ENCODE measurements at regions of chr19 and their contacts with region 1.

Region 1: DNA sequence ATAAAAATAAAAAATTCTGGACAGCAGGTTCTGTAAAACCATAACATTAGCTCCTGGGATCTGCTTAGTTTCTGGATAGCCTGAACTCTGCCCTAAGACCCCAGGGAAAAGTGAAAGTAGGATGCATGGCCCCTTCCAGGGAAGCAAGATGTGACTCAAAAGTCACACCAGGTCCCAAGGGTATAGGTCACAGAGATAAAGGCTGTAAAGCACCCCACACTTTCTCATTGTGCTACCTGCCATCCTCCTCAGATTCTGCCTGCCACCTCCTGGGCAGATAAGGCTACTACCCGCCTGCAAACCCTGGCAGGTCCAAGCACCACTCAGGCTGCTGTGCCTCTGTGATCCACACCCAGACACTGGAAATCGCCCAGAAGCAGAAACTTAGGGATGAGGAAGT is 20.6 kb downstream of the FFAR2 start:
- DNase-seq: peak; percentile 51
- ATAC-seq: peak; percentile 100
- H3K4me3 Mint-ChIP-seq: no peak overlapping the region
- H3K27ac Mint-ChIP-seq: no peak overlapping the region
- H3K4me1 Mint-ChIP-seq: peaks cover 14% of the 10 kb centered on the region
- H3K27me3 Mint-ChIP-seq: no peaks in the 10 kb centered on the region
- CTCF ChIP-seq: peak; percentile 39

Region 2: GRCh38 chr19:35066691-35067563 is 401.7 kb before region 1 on chr19:
- CTCF ChIA-PET with region 1: no interaction called
- POLR2A ChIA-PET with region 1: no interaction called
- intact Hi-C with region 1: loop called (anchors 10 kb)
- DNase-seq: peak; percentile 88
- ATAC-seq: peak; percentile 91
- H3K4me3 Mint-ChIP-seq: peak overlapping the region; percentile 24
- H3K27ac Mint-ChIP-seq: peak overlapping the region; percentile 41
- H3K4me1 Mint-ChIP-seq: peaks cover 30% of the 10 kb centered on the region
- H3K27me3 Mint-ChIP-seq: no peaks in the 10 kb centered on the region
- CTCF ChIP-seq: no peak

Region 3: DNA sequence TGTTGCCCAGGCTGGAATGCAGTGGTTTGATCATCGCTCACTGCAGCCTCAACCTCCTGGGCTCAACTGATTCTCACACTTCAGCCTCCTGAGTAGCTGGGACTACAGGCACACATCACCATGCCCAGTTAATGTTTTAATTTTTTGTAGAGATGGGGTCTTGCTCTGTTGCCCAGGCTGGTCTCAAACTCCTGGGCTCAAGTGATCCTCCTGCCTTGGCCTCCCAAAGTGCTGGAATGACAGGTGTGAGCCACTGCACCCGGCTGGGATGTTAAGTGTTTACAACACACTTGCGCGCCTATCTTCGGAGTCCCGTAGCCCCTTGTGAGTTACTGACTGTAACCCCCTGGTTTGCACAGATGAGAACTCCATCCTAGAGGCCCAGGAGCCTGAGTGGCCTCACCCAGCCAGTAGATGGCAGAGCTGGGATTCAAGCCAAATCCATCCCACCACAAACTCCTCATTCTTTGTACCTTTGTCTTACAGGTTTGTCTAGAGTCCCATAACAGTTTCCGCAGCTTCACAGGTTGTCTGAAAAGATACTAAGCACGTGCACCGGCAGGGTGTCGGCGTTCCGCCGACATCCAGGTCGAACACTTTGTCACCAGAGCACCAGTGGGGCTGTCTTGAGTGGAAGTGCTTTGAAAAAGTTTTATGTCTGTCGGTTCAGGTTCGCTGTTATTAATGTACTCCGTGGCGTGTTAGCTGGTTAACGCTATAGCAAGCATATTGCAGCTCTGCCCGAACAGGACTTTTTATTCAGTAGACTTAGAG is 162.0 kb before region 1 on chr19:
- CTCF ChIA-PET with region 1: interaction called, 9 read pairs
- POLR2A ChIA-PET with region 1: interaction called, 3 read pairs
- intact Hi-C with region 1: loop called (anchors 1 kb)
- DNase-seq: no peak
- ATAC-seq: peak; percentile 60
- H3K4me3 Mint-ChIP-seq: no peak overlapping the region
- H3K27ac Mint-ChIP-seq: peak overlapping the region; percentile 12
- H3K4me1 Mint-ChIP-seq: peaks cover 56% of the 10 kb centered on the region
- H3K27me3 Mint-ChIP-seq: no peaks in the 10 kb centered on the region
- CTCF ChIP-seq: no peak

Region 4: GRCh38 chr19:35404879-35405622 is 63.6 kb before region 1 on chr19:
- CTCF ChIA-PET with region 1: interaction called, 3 read pairs
- POLR2A ChIA-PET with region 1: no interaction called
- intact Hi-C with region 1: loop called (anchors 5 kb)
- DNase-seq: no peak
- ATAC-seq: no peak
- H3K4me3 Mint-ChIP-seq: no peak overlapping the region
- H3K27ac Mint-ChIP-seq: no peak overlapping the region
- H3K4me1 Mint-ChIP-seq: peaks cover 17% of the 10 kb centered on the region
- H3K27me3 Mint-ChIP-seq: no peaks in the 10 kb centered on the region
- CTCF ChIP-seq: no peak

Region 5: GRCh38 chr19:35495107-35496064 is 26.7 kb after region 1 on chr19:
- CTCF ChIA-PET with region 1: interaction called, 18 read pairs
- POLR2A ChIA-PET with region 1: no interaction called
- intact Hi-C with region 1: loop called (anchors 1 kb)
- DNase-seq: peak; percentile 62
- ATAC-seq: peak; percentile 100
- H3K4me3 Mint-ChIP-seq: no peak overlapping the region
- H3K27ac Mint-ChIP-seq: no peak overlapping the region
- H3K4me1 Mint-ChIP-seq: peaks cover 8% of the 10 kb centered on the region
- H3K27me3 Mint-ChIP-seq: peaks cover 5% of the 10 kb centered on the region
- CTCF ChIP-seq: peak; percentile 67

Region 6: GRCh38 chr19:35657904-35658700 is 189.5 kb after region 1 on chr19:
- CTCF ChIA-PET with region 1: no interaction called
- POLR2A ChIA-PET with region 1: no interaction called
- intact Hi-C with region 1: no loop called
- DNase-seq: no peak
- ATAC-seq: no peak
- H3K4me3 Mint-ChIP-seq: no peak overlapping the region
- H3K27ac Mint-ChIP-seq: no peak overlapping the region
- H3K4me1 Mint-ChIP-seq: no peaks in the 10 kb centered on the region
- H3K27me3 Mint-ChIP-seq: no peaks in the 10 kb centered on the region
- CTCF ChIP-seq: no peak